ENCODE measurements at regions of chr14 and their contacts with region 1.

Region 1: GRCh38 chr14:101767618-101768362 is 6.3 kb downstream of the PPP2R5C start:
- DNase-seq: no peak
- H3K4me3 Mint-ChIP-seq: no peak overlapping the region
- H3K27ac Mint-ChIP-seq: no peak overlapping the region
- H3K4me1 Mint-ChIP-seq: peaks cover 37% of the 10 kb centered on the region
- H3K27me3 Mint-ChIP-seq: no peaks in the 10 kb centered on the region

Region 2: GRCh38 chr14:101654051-101654450 is 113.7 kb before region 1 on chr14:
- CTCF ChIA-PET with region 1: no interaction called
- POLR2A ChIA-PET with region 1: no interaction called
- intact Hi-C with region 1: no loop called
- DNase-seq: no peak
- H3K4me3 Mint-ChIP-seq: no peak overlapping the region
- H3K27ac Mint-ChIP-seq: no peak overlapping the region
- H3K4me1 Mint-ChIP-seq: no peaks in the 10 kb centered on the region
- H3K27me3 Mint-ChIP-seq: peaks cover 7% of the 10 kb centered on the region

Region 3: DNA sequence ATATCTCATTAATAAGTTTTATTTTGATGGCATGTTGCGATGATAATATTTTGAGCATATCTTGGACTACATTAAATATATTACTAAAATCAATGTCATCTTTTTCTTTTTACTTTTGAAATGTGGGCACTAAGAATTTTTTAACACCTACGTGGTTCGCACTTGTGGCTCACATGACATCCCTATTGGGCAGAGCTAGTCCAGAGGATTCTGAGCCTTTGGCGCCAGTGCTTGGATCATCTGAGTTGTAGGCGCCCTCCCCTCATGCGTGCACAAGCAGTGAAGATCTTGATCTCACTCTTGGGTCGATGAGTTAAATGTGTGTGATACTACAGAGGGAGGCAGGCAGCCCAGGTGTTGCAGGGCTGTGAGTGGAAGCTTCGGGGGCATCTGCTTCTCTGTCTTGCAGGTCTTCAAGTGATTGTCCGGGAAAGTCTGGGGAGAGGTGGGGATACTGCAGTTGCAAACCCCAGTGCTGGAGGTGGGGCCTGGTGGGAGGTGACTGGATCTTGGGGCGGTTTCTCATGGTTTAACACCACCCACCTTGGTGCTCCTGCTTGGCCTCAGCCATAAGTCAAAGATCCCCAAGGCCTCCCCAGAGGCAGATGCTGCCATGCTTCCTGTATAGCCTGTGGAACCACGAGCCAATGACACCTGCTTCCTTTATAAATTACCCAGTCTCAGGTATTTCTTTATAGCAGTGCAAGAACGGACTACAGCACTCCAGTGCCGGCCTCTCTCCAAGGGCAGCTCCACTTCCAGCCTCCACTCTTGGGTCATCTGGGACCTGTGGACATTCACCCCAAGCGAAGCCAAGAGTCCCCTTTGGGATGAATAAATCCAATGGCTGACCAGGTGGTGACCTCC is 52.3 kb before region 1 on chr14:
- CTCF ChIA-PET with region 1: no interaction called
- POLR2A ChIA-PET with region 1: no interaction called
- intact Hi-C with region 1: no loop called
- DNase-seq: no peak
- H3K4me3 Mint-ChIP-seq: no peak overlapping the region
- H3K27ac Mint-ChIP-seq: peak overlapping the region; percentile 40
- H3K4me1 Mint-ChIP-seq: peaks cover 24% of the 10 kb centered on the region
- H3K27me3 Mint-ChIP-seq: no peaks in the 10 kb centered on the region

Region 4: GRCh38 chr14:101781240-101782061 is 13.7 kb after region 1 on chr14:
- CTCF ChIA-PET with region 1: interaction called, 12 read pairs
- POLR2A ChIA-PET with region 1: interaction called, 3 read pairs
- intact Hi-C with region 1: no loop called
- DNase-seq: peak; percentile 47
- H3K4me3 Mint-ChIP-seq: peak overlapping the region; percentile 63
- H3K27ac Mint-ChIP-seq: no peak overlapping the region
- H3K4me1 Mint-ChIP-seq: peaks cover 26% of the 10 kb centered on the region
- H3K27me3 Mint-ChIP-seq: no peaks in the 10 kb centered on the region

Region 5: GRCh38 chr14:101834800-101835547 is 67.2 kb after region 1 on chr14:
- CTCF ChIA-PET with region 1: interaction called, 82 read pairs
- POLR2A ChIA-PET with region 1: interaction called, 6 read pairs
- intact Hi-C with region 1: no loop called
- DNase-seq: no peak
- H3K4me3 Mint-ChIP-seq: no peak overlapping the region
- H3K27ac Mint-ChIP-seq: peak overlapping the region; percentile 64
- H3K4me1 Mint-ChIP-seq: peaks cover 91% of the 10 kb centered on the region
- H3K27me3 Mint-ChIP-seq: no peaks in the 10 kb centered on the region

Region 6: GRCh38 chr14:101876555-101876938 is 108.8 kb after region 1 on chr14:
- CTCF ChIA-PET with region 1: interaction called, 26 read pairs
- POLR2A ChIA-PET with region 1: interaction called, 4 read pairs
- intact Hi-C with region 1: loop called (anchors 10 kb)
- DNase-seq: peak; percentile 87
- H3K4me3 Mint-ChIP-seq: peak overlapping the region; percentile 56
- H3K27ac Mint-ChIP-seq: peak overlapping the region; percentile 84
- H3K4me1 Mint-ChIP-seq: peaks cover 91% of the 10 kb centered on the region
- H3K27me3 Mint-ChIP-seq: no peaks in the 10 kb centered on the region

Region 7: GRCh38 chr14:101922866-101923265 is 155.1 kb after region 1 on chr14:
- CTCF ChIA-PET with region 1: interaction called, 10 read pairs
- POLR2A ChIA-PET with region 1: no interaction called
- intact Hi-C with region 1: no loop called
- DNase-seq: no peak
- H3K4me3 Mint-ChIP-seq: no peak overlapping the region
- H3K27ac Mint-ChIP-seq: peak overlapping the region; percentile 4
- H3K4me1 Mint-ChIP-seq: no peaks in the 10 kb centered on the region
- H3K27me3 Mint-ChIP-seq: no peaks in the 10 kb centered on the region

Region 8: GRCh38 chr14:101964297-101965144 is 196.7 kb after region 1 on chr14 and contains the start of gene DYNC1H1:
- CTCF ChIA-PET with region 1: interaction called, 15 read pairs
- POLR2A ChIA-PET with region 1: no interaction called
- intact Hi-C with region 1: loop called (anchors 2 kb)
- DNase-seq: peak; percentile 91
- H3K4me3 Mint-ChIP-seq: peak within 1 kb of the TSS; percentile 88
- H3K27ac Mint-ChIP-seq: peak within 1 kb of the TSS; percentile 84
- H3K4me1 Mint-ChIP-seq: peaks cover 35% of the 10 kb centered on the region
- H3K27me3 Mint-ChIP-seq: no peaks in the 10 kb centered on the region
- total RNA-seq, gene DYNC1H1: 242 to 245 TPM

Measured in activated CD4-positive, alpha-beta memory T cell treated with anti-CD3 and anti-CD28 coated beads for 36 hours (primary cell).